CD4-positive, alpha-beta memory T cell (primary cell): ENCODE measurements at regions of chr12 and their contacts with region 1.

Region 1: DNA sequence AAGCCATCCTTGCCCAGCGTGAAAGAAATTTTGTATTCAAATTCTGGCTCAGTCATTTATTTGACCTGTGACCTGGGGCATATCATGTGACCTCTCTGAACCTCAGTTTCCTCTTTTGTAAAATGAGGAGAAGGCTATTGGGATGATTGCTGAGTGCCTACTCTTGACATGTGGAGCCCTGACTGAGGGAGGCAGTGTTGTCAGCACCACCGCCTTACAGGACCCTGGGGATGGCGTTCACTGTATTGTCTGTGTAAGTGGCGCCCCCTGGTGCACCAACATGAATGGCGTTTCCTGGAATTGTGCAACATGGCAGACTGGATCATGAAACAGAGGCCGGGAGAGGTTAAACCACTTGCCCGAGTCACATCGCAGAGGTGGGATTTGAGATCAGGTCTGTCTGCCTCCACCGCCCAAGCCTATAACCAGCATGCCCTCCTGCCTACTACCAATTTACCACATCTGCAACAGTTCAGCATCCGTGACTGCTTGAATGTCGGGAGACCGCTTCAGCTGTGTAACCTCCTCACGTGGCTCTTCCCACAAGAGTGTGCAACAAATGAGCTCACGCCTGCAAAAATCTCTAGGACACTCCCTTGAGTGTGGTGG is 20.1 kb upstream of the CCDC63 start:
- DNase-seq: peak; percentile 73 to 83 (median 77)
- H3K4me3 ChIP-seq: peak overlapping the region in 1 of 2 donors; percentile 5
- H3K4me3 Mint-ChIP-seq: peak overlapping the region; percentile 36 to 76 (median 66)
- H3K27ac ChIP-seq: no peak overlapping the region
- H3K27ac Mint-ChIP-seq: peak overlapping the region in 3 of 7 donors; percentile 9 to 89 (median 60)
- H3K4me1 ChIP-seq: peaks cover 6% of the 10 kb centered on the region
- H3K4me1 Mint-ChIP-seq: peaks cover 3 to 7% (median 7%) of the 10 kb centered on the region in 4 donors
- H3K27me3 ChIP-seq: no peaks in the 10 kb centered on the region
- H3K27me3 Mint-ChIP-seq: peaks cover 1 to 4% of the 10 kb centered on the region in 2 donors

Region 2: GRCh38 chr12:110508071-110508586 is 318.6 kb before region 1 on chr12:
- CTCF ChIA-PET with region 1: interaction called, 4 read pairs
- POLR2A ChIA-PET with region 1: no interaction called
- intact Hi-C with region 1: loop called (anchors 1 kb)
- DNase-seq: no peak
- H3K4me3 ChIP-seq: no peak overlapping the region
- H3K4me3 Mint-ChIP-seq: no peak overlapping the region
- H3K27ac ChIP-seq: no peak overlapping the region
- H3K27ac Mint-ChIP-seq: no peak overlapping the region
- H3K4me1 ChIP-seq: no peaks in the 10 kb centered on the region
- H3K4me1 Mint-ChIP-seq: no peaks in the 10 kb centered on the region
- H3K27me3 ChIP-seq: no peaks in the 10 kb centered on the region
- H3K27me3 Mint-ChIP-seq: no peaks in the 10 kb centered on the region

Region 3: GRCh38 chr12:110619534-110619953 is 207.2 kb before region 1 on chr12:
- CTCF ChIA-PET with region 1: no interaction called
- POLR2A ChIA-PET with region 1: no interaction called
- intact Hi-C with region 1: loop called (anchors 1 kb)
- DNase-seq: no peak
- H3K4me3 ChIP-seq: no peak overlapping the region
- H3K4me3 Mint-ChIP-seq: no peak overlapping the region
- H3K27ac ChIP-seq: no peak overlapping the region
- H3K27ac Mint-ChIP-seq: no peak overlapping the region
- H3K4me1 ChIP-seq: peaks cover 3% of the 10 kb centered on the region
- H3K4me1 Mint-ChIP-seq: peaks cover 0 to 2% (median under 1%) of the 10 kb centered on the region in 4 donors
- H3K27me3 ChIP-seq: no peaks in the 10 kb centered on the region
- H3K27me3 Mint-ChIP-seq: no peaks in the 10 kb centered on the region

Region 4: GRCh38 chr12:110704748-110705147 is 121.9 kb before region 1 on chr12:
- CTCF ChIA-PET with region 1: interaction called, 17 read pairs
- POLR2A ChIA-PET with region 1: no interaction called
- intact Hi-C with region 1: loop called (anchors 1 kb)
- DNase-seq: peak in 3 of 5 donors; percentile 13 to 25 (median 16)
- H3K4me3 ChIP-seq: no peak overlapping the region
- H3K4me3 Mint-ChIP-seq: no peak overlapping the region
- H3K27ac ChIP-seq: no peak overlapping the region
- H3K27ac Mint-ChIP-seq: no peak overlapping the region
- H3K4me1 ChIP-seq: no peaks in the 10 kb centered on the region
- H3K4me1 Mint-ChIP-seq: peaks cover 0 to 2% (median 0%) of the 10 kb centered on the region in 4 donors
- H3K27me3 ChIP-seq: no peaks in the 10 kb centered on the region
- H3K27me3 Mint-ChIP-seq: no peaks in the 10 kb centered on the region